ENCODE measurements at regions of chr20 and their contacts with region 1.

Region 1: GRCh38 chr20:10090588-10091166 is 55.9 kb downstream of the ANKEF1 start:
- DNase-seq: peak; percentile 53
- ATAC-seq: peak; percentile 90
- H3K4me3 ChIP-seq: no peak overlapping the region
- H3K27ac ChIP-seq: no peak overlapping the region
- H3K4me1 ChIP-seq: peaks cover 1% of the 10 kb centered on the region; the same call in 1 of the 2 replicates
- H3K27me3 ChIP-seq: no peaks in the 10 kb centered on the region; the same call in 1 of the 2 replicates
- CTCF ChIP-seq: peak; percentile 74
- POLR2A ChIP-seq: no peak
- RAD21 ChIP-seq: peak; percentile 70

Region 2: GRCh38 chr20:10357974-10358373 is 267.3 kb after region 1 on chr20:
- CTCF ChIA-PET with region 1: no interaction called
- POLR2A ChIA-PET with region 1: no interaction called
- dilution Hi-C with region 1: no loop called
- in situ Hi-C with region 1: no loop called
- intact Hi-C with region 1: loop called (anchors 5 kb)
- DNase-seq: peak; percentile 17
- ATAC-seq: peak; percentile 76
- H3K4me3 ChIP-seq: no peak overlapping the region
- H3K27ac ChIP-seq: no peak overlapping the region
- H3K4me1 ChIP-seq: peaks cover 4% of the 10 kb centered on the region; the same call in 1 of the 2 replicates
- H3K27me3 ChIP-seq: no peaks in the 10 kb centered on the region; the same call in 1 of the 2 replicates
- CTCF ChIP-seq: peak; percentile 72
- POLR2A ChIP-seq: no peak
- RAD21 ChIP-seq: peak; percentile 68

Region 3: GRCh38 chr20:10427060-10427692 is 336.5 kb after region 1 on chr20:
- CTCF ChIA-PET with region 1: no interaction called
- POLR2A ChIA-PET with region 1: no interaction called
- dilution Hi-C with region 1: no loop called
- in situ Hi-C with region 1: no loop called
- intact Hi-C with region 1: loop called (anchors 2 kb)
- DNase-seq: peak; percentile 74
- ATAC-seq: peak; percentile 81
- H3K4me3 ChIP-seq: no peak overlapping the region
- H3K27ac ChIP-seq: no peak overlapping the region
- H3K4me1 ChIP-seq: peaks cover 2% of the 10 kb centered on the region; the same call in 1 of the 2 replicates
- H3K27me3 ChIP-seq: no peaks in the 10 kb centered on the region
- CTCF ChIP-seq: peak; percentile 83
- POLR2A ChIP-seq: no peak
- RAD21 ChIP-seq: peak; percentile 83

Measured in IMR-90 (cell line).